ENCODE measurements at regions of chr3 and their contacts with region 1.

Region 1: DNA sequence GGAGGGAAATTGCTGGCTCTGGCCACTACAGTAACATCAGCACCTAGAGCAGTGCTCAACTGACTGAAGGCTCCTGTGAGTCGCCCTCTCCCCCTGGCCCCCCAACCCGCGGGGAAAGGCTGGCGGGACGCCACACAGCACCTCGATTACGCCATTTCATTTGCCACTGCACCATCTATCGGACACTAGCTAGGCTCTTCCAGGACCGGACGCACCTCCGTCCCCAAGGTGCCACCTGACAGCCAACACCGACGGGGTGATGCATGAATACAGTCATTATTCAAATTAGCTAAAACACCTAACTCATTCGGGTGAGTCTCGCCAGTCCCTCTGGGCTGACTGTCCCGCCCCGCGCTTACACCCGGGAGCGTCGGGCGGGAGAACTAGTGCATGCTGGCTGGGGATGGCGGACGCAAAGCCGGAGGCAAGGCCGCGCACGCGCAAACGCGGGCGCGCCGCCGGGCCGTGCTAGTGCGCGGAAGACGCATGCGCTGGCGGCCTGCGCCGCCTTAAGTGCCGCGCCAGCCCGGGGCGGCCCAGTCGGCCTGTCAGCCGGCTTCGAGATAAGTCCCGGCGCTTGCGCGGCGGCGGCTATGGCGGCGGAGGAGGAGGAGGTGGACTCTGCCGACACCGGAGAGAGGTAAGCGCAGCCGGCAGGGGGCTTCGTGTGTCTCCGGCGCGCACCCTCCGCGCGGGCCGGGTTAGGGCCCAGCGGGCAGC is at the start of gene ABHD5:
- DNase-seq: peak; percentile 87
- ATAC-seq: peak; percentile 79
- H3K4me3 Mint-ChIP-seq: peak within 1 kb of the TSS; percentile 89
- H3K27ac Mint-ChIP-seq: peak within 1 kb of the TSS; percentile 99
- H3K4me1 Mint-ChIP-seq: peaks cover 44% of the 10 kb centered on the region
- H3K27me3 Mint-ChIP-seq: peaks cover 5% of the 10 kb centered on the region
- CTCF ChIP-seq: no peak
- total RNA-seq, gene ABHD5: 9.5 to 11.3 TPM (median 10.9 TPM) in 3 replicates

Region 2: DNA sequence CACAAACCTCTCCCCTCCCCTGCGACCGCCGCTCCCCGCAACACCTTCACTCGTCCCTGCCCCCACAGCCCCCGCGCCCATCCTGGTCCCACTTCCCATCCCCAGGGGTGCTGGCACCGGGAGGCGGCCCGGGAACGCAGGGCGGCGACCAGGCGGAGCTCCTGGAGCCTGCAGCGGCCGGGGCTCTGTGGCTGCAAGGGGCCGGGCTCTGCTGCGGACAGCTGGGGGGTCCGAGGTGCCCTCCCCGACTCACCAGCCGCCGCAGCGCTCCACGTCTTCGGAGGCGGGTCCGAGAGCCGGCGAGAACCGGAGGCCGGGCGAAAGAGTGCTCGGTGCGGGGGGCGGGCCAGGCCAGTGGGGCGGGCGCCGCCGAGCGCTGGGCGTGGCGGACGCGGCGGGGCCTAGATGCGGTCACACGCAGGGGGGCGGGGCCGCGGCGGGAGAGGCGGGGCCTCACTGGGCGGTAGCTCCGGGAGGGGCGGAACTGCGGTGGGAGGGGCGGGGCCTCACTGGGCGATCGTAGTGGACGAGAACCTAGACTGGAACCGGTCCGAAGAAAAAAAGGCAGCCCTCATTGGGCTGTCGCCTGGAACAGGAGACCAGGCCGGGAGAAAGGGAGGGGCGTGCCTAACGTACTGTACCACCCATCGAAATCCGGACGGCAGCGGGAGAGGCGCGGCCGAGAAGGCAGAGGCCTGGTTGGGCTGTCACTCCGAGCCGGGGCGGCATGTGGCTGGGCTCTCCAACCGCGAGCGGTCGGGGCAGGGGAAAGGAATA is 68.7 kb before region 1 on chr3 and contains the start of gene ANO10:
- CTCF ChIA-PET with region 1: interaction called, 3 read pairs
- POLR2A ChIA-PET with region 1: interaction called, 11 read pairs
- DNase-seq: peak; percentile 98
- ATAC-seq: peak; percentile 96
- H3K4me3 Mint-ChIP-seq: peak within 1 kb of the TSS; percentile 96
- H3K27ac Mint-ChIP-seq: peak within 1 kb of the TSS; percentile 100
- H3K4me1 Mint-ChIP-seq: peaks cover 17% of the 10 kb centered on the region
- H3K27me3 Mint-ChIP-seq: no peaks in the 10 kb centered on the region
- CTCF ChIP-seq: no peak
- total RNA-seq, gene ANO10: 35.1 to 38.1 TPM (median 36.6 TPM) in 3 replicates

Region 3: GRCh38 chr3:44045476-44046275 is 355.1 kb after region 1 on chr3:
- CTCF ChIA-PET with region 1: no interaction called
- POLR2A ChIA-PET with region 1: no interaction called
- DNase-seq: no peak
- ATAC-seq: no peak
- H3K4me3 Mint-ChIP-seq: no peak overlapping the region
- H3K27ac Mint-ChIP-seq: no peak overlapping the region
- H3K4me1 Mint-ChIP-seq: peaks cover 23% of the 10 kb centered on the region
- H3K27me3 Mint-ChIP-seq: no peaks in the 10 kb centered on the region
- CTCF ChIP-seq: no peak

Measured in WTC11 (cell line).